Gastrocnemius medialis (tissue), 4 donors: ENCODE measurements at regions of chr15 and their contacts with region 1.

Region 1: DNA sequence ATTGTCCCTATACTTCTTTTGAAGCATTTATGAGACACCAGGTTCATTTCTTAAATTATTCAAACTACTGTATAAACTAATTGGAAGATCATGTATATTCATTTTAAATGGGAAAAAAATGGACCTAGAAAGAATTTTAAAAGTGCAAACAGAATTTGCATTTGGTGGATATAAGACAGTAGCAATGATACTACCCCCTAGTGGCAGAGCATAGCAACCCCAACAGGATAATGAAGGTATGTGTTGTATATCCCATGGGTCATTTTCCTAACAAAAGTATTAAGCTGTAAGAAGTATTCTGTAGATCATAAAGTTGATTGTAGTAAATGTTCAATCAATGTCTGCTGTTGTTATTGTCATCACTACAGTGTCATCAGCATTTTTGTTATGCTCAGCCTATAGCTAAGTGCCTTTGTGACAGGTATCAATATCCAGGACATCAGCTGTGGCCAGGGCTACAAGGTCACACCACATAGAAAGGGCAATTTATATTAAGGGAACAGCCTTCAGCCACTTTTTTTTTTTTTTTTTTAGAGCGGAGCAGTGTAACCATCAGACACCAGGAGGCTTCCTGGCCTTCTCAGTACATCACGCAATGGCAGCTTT is 175.8 kb downstream of the FOXB1 start:
- DNase-seq: no peak
- ATAC-seq: peak in 1 of 2 donors; percentile 33
- H3K4me3 ChIP-seq: no peak overlapping the region
- H3K27ac ChIP-seq: no peak overlapping the region
- H3K4me1 ChIP-seq: no peaks in the 10 kb centered on the region
- H3K27me3 ChIP-seq: no peaks in the 10 kb centered on the region
- CTCF ChIP-seq: peak; percentile 37 to 66 (median 50)
- POLR2A ChIP-seq: no peak

Region 2: GRCh38 chr15:59699810-59700431 is 480.0 kb before region 1 on chr15:
- in situ Hi-C with region 1: loop called in 1 of 4 experiments (anchors 25 kb)
- intact Hi-C with region 1: no loop called
- DNase-seq: no peak
- ATAC-seq: no peak
- H3K4me3 ChIP-seq: no peak overlapping the region
- H3K27ac ChIP-seq: no peak overlapping the region
- H3K4me1 ChIP-seq: peaks cover 4 to 14% of the 10 kb centered on the region in 2 donors
- H3K27me3 ChIP-seq: no peaks in the 10 kb centered on the region
- CTCF ChIP-seq: no peak
- POLR2A ChIP-seq: no peak

Region 3: GRCh38 chr15:59741274-59741906 is 438.5 kb before region 1 on chr15:
- in situ Hi-C with region 1: loop called in 1 of 4 experiments (anchors 25 kb)
- intact Hi-C with region 1: no loop called
- DNase-seq: no peak
- ATAC-seq: no peak
- H3K4me3 ChIP-seq: no peak overlapping the region
- H3K27ac ChIP-seq: no peak overlapping the region
- H3K4me1 ChIP-seq: no peaks in the 10 kb centered on the region
- H3K27me3 ChIP-seq: peaks cover 0 to 2% (median 0%) of the 10 kb centered on the region in 3 donors
- CTCF ChIP-seq: no peak
- POLR2A ChIP-seq: no peak

Region 4: DNA sequence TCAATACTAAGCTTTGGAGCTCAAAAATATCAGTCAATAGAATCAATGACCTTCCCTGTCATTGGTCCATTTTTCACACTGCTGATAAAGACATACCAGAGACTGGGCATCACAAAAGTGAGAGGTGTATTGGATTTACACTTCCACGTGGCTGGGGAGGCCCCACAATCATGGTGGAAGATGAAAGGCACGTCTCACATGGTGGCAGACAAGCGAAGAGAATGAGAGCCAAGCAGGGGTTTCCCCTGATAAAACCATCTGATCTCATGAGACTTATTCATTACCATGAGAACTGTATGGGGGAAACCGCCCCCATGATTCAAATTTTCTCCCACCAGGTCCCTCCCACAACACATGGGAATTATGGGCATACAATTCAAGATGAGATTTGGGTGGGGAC is 136.0 kb after region 1 on chr15:
- in situ Hi-C with region 1: no loop called
- intact Hi-C with region 1: no loop called
- DNase-seq: no peak
- ATAC-seq: no peak
- H3K4me3 ChIP-seq: no peak overlapping the region
- H3K27ac ChIP-seq: no peak overlapping the region
- H3K4me1 ChIP-seq: no peaks in the 10 kb centered on the region
- H3K27me3 ChIP-seq: no peaks in the 10 kb centered on the region
- CTCF ChIP-seq: no peak
- POLR2A ChIP-seq: no peak